Aorta (tissue), 5 donors: ENCODE measurements at regions of chr1 and their contacts with region 1.

Region 1: GRCh38 chr1:174022080-174022975 is at the start of gene RC3H1:
- DNase-seq: peak; percentile 93 to 97
- ATAC-seq: peak; percentile 98
- H3K4me3 ChIP-seq: peak within 1 kb of the TSS; percentile 66 to 85
- H3K27ac ChIP-seq: peak within 1 kb of the TSS; percentile 92 to 97
- H3K4me1 ChIP-seq: peaks cover 2 to 4% of the 10 kb centered on the region in 2 donors
- H3K27me3 ChIP-seq: no peaks in the 10 kb centered on the region
- total RNA-seq, gene RC3H1: 33.9 to 51.7 TPM

Region 2: GRCh38 chr1:173997796-173998195 is 24.5 kb before region 1 on chr1:
- intact Hi-C with region 1: no loop called
- DNase-seq: no peak
- ATAC-seq: no peak
- H3K4me3 ChIP-seq: no peak overlapping the region
- H3K27ac ChIP-seq: no peak overlapping the region
- H3K4me1 ChIP-seq: no peaks in the 10 kb centered on the region
- H3K27me3 ChIP-seq: no peaks in the 10 kb centered on the region

Region 3: DNA sequence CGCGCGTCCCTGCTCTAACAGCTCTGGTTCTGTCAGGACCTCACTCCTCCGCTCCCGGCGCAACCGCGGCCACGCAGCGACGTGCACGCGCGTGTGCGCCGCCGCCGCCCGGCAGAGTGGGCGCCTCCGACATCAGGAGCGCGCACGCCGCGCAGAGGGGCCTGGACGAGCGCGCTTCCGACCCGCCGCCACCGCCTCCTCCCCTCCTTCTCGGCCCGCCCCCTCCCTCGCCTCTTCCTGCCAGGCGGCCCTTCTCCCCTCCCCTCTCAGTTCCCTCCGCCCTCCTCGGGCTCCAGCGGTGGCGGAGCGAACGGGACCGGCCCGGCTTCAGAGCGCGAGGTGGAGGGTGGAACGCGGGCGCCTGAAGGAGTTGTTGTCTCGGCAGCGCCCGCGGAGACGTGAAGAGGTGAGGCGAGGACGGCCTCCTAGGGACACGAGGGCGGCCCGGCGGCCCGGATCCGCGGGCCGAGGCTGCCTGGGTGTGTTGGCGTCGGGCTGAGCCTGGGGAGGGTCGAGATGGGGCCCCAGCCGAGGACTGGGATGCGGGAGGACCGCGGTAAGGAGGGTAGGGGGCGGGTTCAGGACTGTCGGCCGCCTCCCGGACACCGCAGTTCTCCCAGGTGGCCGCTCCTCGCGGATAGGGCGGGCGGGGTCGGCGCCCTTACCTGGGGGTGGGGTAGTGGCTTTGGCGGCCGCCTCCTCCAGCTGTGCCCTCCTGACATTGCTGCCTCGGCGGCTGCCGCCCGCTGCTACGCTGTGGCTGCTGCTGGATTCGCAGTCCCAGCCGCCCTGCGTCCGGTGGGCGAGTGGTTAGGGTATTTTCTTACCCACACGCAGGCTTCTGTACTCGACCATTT is 137.2 kb after region 1 on chr1 and contains the start of gene RABGAP1L:
- intact Hi-C with region 1: loop called in 1 of 2 experiments (anchors 5 kb)
- DNase-seq: peak; percentile 96 to 98
- ATAC-seq: peak; percentile 99
- H3K4me3 ChIP-seq: peak within 1 kb of the TSS; percentile 93 to 98
- H3K27ac ChIP-seq: peak within 1 kb of the TSS in 1 of 2 donors; percentile 66
- H3K4me1 ChIP-seq: no peaks in the 10 kb centered on the region
- H3K27me3 ChIP-seq: no peaks in the 10 kb centered on the region
- total RNA-seq, gene RABGAP1L: 42.9 to 56.4 TPM

Region 4: GRCh38 chr1:174191255-174191906 is 169.1 kb after region 1 on chr1:
- intact Hi-C with region 1: loop called in 1 of 2 experiments (anchors 10 kb)
- DNase-seq: no peak
- ATAC-seq: no peak
- H3K4me3 ChIP-seq: no peak overlapping the region
- H3K27ac ChIP-seq: no peak overlapping the region
- H3K4me1 ChIP-seq: no peaks in the 10 kb centered on the region
- H3K27me3 ChIP-seq: no peaks in the 10 kb centered on the region

Region 5: GRCh38 chr1:174276087-174276486 is 253.8 kb after region 1 on chr1:
- intact Hi-C with region 1: no loop called
- DNase-seq: no peak
- ATAC-seq: no peak
- H3K4me3 ChIP-seq: no peak overlapping the region
- H3K27ac ChIP-seq: no peak overlapping the region
- H3K4me1 ChIP-seq: no peaks in the 10 kb centered on the region
- H3K27me3 ChIP-seq: no peaks in the 10 kb centered on the region